Head of caudate nucleus (tissue), 42 donors: ENCODE measurements at regions of chr7 and their contacts with region 1.

Region 1: GRCh38 chr7:150404805-150405583 is 25.9 kb downstream of the ZNF775 start:
- DNase-seq: peak; percentile 77 to 96 (median 90)

Region 2: DNA sequence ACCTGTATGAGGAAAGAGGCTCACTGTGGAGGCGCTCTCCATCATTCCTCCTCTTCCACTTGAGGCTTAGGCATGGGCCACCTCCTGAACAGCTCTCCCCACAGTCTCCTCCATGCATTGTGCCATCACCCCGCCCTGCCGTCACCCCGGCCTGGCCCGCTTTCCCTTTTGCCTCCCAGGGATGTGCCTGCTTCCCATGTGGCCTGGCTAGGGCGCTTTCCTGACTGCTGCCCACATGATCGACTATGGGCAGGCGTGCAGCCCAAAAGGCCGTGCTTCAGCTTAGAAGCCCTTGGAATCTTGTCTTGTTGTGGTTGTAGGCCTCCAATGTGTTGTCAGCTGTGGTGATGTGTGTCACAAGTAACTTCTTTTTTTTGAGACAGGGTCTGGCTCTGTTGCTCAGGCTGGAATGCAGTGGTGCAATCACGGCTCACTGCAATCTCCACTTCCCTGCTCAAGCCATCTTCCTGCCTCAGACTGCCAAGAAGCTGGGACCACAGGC is 79.8 kb before region 1 on chr7:
- intact Hi-C with region 1: no loop called
- DNase-seq: no peak

Region 3: GRCh38 chr7:150368096-150368883 is 36.7 kb before region 1 on chr7 and contains the start of gene REPIN1:
- intact Hi-C with region 1: loop called (anchors 5 kb)
- DNase-seq: peak; percentile 78 to 98 (median 93)

Region 4: DNA sequence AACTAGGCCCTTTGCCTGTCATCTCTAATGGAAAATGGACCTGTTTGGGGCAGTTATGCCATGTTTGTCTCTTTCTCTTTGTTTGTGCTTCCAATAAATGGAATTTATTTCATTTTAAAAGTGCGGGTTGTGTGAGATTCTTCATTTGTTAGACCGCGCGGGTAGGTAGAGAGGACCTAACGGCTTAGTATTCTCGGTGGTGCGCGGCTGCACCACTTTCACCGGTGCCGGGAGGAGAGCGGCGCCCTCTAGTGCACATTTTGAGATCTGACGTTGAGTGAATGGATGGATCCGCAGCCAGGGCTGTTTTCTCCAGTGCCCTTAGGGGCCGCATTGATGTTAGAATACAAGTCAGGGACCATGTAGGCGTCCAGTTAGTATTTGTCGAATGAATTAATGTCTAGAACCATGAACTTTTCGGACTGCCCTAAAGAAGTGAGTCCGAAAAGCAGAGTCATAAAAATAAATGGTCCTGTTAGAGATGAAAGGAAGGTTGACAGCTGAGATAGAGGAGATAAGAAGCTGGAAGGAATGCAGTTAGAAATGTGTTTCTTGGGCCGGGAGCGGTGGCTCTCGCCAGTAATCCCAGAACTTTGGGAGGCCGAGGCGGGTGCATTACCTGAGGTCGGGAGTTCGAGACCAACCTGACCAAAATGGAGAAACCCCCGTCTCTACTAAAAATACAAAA is 16.1 kb after region 1 on chr7:
- intact Hi-C with region 1: loop called (anchors 2 kb)
- DNase-seq: peak in 41 of 42 donors; percentile 69 to 94 (median 84)

Region 5: GRCh38 chr7:150610233-150610632 is 205.2 kb after region 1 on chr7:
- intact Hi-C with region 1: no loop called
- DNase-seq: no peak